Breast epithelium (tissue), 4 donors: ENCODE measurements at regions of chr1 and their contacts with region 1.

Region 1: GRCh38 chr1:214261206-214262123 is 19.5 kb upstream of the SMYD2 start:
- DNase-seq: peak; percentile 58 to 79
- H3K4me3 ChIP-seq: no peak overlapping the region
- H3K27ac ChIP-seq: no peak overlapping the region
- H3K4me1 ChIP-seq: no peaks in the 10 kb centered on the region
- H3K27me3 ChIP-seq: peaks cover 0 to 8% of the 10 kb centered on the region in 2 donors
- CTCF ChIP-seq: peak; percentile 55 to 87 (median 83)
- POLR2A ChIP-seq: no peak

Region 2: DNA sequence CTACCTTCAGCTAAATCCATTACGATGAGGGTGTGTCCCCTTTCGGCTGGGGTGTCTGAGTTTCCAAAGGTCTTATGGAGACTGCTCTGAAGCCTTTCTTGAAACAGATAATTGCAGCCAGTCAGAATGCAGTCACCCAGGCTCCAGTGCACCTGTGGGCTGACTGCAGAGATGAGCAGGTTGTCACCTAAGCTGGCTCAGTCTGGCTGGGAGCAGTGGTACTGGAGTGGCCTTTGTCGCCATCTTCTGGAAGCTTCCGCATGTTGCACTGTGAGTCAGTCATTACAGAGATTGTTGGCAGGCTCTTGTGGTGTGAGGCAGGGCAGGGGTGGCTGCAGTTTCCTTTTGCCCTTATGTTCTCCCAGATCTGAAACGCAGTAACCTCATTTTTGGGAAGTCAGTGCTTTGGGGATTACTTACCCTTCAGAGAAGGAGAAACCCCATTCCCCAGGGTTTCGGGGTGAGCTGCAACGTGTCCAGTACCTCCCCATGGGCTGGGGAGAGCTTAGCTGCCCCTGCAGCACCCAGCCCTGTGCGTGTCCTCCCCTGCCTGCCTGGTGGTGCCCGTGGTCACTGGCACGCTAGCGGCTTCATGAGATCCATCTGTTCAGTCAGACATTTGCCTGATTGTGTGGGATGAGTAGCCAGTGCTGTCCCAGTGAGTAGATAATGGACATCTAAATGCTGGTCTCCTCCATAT is 67.5 kb after region 1 on chr1:
- intact Hi-C with region 1: loop called (anchors 10 kb)
- DNase-seq: peak; percentile 82 to 87
- H3K4me3 ChIP-seq: no peak overlapping the region
- H3K27ac ChIP-seq: no peak overlapping the region
- H3K4me1 ChIP-seq: no peaks in the 10 kb centered on the region
- H3K27me3 ChIP-seq: no peaks in the 10 kb centered on the region
- CTCF ChIP-seq: peak; percentile 55 to 91 (median 87)
- POLR2A ChIP-seq: no peak